Aorta (tissue), 5 donors: ENCODE measurements at regions of chr10 and their contacts with region 1.

Region 1: GRCh38 chr10:123858077-123858681 is 33.4 kb downstream of the CPXM2 start:
- DNase-seq: peak in 1 of 2 donors; percentile 60
- ATAC-seq: peak; percentile 63
- H3K4me3 ChIP-seq: no peak overlapping the region
- H3K27ac ChIP-seq: no peak overlapping the region
- H3K4me1 ChIP-seq: peaks cover 0 to 3% of the 10 kb centered on the region in 2 donors
- H3K27me3 ChIP-seq: no peaks in the 10 kb centered on the region

Region 2: GRCh38 chr10:123800289-123800688 is 57.9 kb before region 1 on chr10:
- intact Hi-C with region 1: loop called in 1 of 2 experiments (anchors 5 kb)
- DNase-seq: no peak
- ATAC-seq: peak; percentile 68
- H3K4me3 ChIP-seq: peak overlapping the region in 1 of 2 donors; percentile 28
- H3K27ac ChIP-seq: peak overlapping the region; percentile 85 to 90
- H3K4me1 ChIP-seq: peaks cover 0 to 4% of the 10 kb centered on the region in 2 donors
- H3K27me3 ChIP-seq: no peaks in the 10 kb centered on the region

Region 3: DNA sequence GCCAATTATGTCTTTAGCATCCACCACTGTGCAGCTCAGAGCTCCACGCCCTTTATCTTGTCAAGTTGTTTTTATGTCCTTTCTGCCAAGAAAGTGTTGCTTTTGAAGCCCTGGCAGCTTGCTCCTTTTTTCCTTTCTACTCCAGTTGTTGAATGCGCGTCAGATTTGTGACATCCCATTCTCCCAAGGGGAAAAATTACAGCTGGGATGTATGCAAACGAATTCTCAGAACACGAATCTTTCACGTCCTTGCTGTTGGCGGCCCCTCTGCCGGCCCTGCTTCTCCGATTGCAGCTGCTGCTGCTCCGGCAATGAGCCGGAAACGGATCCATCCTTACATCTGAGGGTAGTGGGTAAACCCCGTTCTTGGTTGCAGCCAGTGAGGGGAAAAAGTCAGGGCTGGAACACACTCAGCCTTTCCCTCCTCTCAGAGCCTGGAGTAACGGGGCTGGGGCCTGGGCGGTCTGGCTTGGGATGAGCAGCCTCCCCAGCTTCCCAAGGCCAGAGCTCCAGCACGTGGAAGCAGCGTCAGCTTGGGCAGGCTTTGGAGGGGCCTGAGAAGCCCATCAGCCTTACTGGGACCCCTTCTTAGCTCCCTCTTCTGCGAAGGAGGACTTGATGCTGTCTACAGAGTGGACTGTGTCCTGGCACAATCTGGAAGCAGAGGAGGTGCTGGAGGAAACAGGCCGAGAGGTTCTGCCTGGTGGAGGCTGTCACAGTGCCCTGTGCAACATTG is 314.2 kb after region 1 on chr10:
- intact Hi-C with region 1: no loop called
- DNase-seq: no peak
- ATAC-seq: no peak
- H3K4me3 ChIP-seq: no peak overlapping the region
- H3K27ac ChIP-seq: no peak overlapping the region
- H3K4me1 ChIP-seq: no peaks in the 10 kb centered on the region
- H3K27me3 ChIP-seq: no peaks in the 10 kb centered on the region